Thyroid gland (tissue), 4 donors: ENCODE measurements at regions of chr10 and their contacts with region 1.

Region 1: DNA sequence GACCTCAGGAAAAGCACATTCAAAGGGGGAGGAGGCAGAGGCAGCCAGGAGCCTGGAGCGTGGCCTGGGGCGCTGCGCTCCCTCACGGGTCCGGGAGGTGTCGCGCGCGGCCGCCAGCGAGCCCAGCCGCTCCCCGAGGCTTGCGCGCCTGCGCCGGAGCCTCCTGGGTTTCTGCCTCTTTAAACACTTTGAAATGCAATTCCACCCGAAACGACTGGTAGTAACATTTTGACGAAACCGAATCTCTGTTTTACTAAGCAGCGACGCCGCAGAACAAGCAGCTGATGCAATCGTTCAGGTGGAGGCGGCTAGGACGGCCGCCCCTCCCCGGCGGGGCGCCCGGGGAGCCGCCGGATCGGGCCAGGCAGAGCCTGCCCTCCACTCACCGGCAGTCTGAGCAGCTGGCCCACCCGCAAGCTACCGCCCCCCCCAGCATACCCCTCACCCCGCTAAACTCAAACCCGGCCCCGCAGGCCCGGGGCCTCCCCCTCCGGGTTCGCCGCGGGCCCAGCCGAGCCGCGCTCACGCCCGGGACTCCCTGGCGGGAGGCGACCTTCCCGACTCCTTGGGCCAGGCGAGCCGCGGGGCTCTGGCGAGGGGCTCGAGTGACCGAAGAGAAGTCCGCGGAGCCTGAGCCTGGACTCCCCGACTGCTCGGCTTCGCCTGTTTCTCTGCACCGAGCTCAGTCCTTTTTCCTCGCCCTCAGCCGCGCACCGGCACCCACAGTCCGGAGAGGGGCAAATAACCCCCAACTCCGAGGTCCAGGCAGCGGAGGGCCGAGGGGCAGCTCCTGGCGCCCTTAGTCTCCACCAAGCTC is 3.2 kb downstream of the MKX start:
- DNase-seq: peak; percentile 86 to 87
- H3K4me3 ChIP-seq: peak overlapping the region; percentile 30 to 91 (median 58)
- H3K27ac ChIP-seq: peak overlapping the region in 2 of 3 donors; percentile 26 to 81
- H3K4me1 ChIP-seq: peaks cover 38 to 47% of the 10 kb centered on the region in 2 donors
- H3K27me3 ChIP-seq: peaks cover 15% of the 10 kb centered on the region
- CTCF ChIP-seq: peak; percentile 53 to 92 (median 80)
- POLR2A ChIP-seq: peak in 1 of 2 donors; percentile 32

Region 2: GRCh38 chr10:28179006-28179742 is 436.8 kb after region 1 on chr10:
- intact Hi-C with region 1: loop called (anchors 10 kb)
- DNase-seq: no peak
- H3K4me3 ChIP-seq: no peak overlapping the region
- H3K27ac ChIP-seq: peak overlapping the region in 1 of 3 donors; percentile 30
- H3K4me1 ChIP-seq: peaks cover 0 to 15% of the 10 kb centered on the region in 2 donors
- H3K27me3 ChIP-seq: no peaks in the 10 kb centered on the region
- CTCF ChIP-seq: peak; percentile 46 to 75 (median 65)
- POLR2A ChIP-seq: no peak

Region 3: GRCh38 chr10:28241741-28242399 is 499.5 kb after region 1 on chr10:
- intact Hi-C with region 1: loop called (anchors 10 kb)
- DNase-seq: peak; percentile 24 to 29
- H3K4me3 ChIP-seq: no peak overlapping the region
- H3K27ac ChIP-seq: no peak overlapping the region
- H3K4me1 ChIP-seq: no peaks in the 10 kb centered on the region
- H3K27me3 ChIP-seq: no peaks in the 10 kb centered on the region
- CTCF ChIP-seq: peak; percentile 82 to 94 (median 92)
- POLR2A ChIP-seq: no peak